HepG2 (cell line): ENCODE measurements at regions of chr21 and their contacts with region 1.

Region 1: DNA sequence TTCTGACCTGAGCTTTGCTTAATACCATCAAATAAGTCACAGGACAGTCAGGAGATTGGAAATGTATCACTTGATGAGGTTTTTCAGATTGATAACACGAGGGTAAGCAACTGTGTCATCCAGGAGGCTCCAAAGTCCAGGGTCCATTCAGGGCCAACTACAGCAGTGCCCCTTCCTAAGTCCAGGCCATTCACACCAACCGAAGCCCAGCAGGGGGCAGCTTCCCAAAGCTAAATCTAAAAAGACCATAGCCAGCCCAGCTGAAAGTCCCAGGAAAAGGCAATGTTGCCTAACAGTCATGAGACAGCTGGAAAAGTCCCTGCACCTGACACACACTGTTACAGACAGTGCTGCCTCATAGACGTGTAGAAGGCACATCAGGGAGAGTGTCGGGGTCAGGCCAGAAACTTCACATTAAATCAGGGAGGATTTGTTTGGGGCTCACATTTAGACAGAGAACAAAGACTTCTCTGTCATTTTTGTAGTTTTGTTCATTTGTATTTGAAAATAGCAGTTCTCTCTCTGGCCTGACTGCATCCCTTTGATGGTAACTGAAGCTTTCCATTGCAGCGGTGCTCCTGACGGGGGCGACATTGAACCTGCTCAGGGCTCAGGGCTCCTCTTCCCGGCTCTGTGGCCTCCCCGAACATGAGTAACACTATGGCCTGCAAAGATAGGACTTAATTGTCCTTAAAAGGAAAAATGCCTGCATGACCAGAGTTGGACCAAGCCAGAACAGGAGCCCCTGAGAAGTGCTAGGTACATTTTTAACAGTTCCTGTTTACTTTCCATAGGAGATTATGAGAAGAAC is 200.4 kb downstream of the NRIP1 start:
- DNase-seq: peak; percentile 94
- ATAC-seq: peak; percentile 95
- H3K4me3 ChIP-seq: peak overlapping the region in 2 of 3 experiments; percentile 48 to 53; a peak in 4 of 6 replicates
- H3K27ac ChIP-seq: peak overlapping the region; percentile 76
- H3K4me1 ChIP-seq: peaks cover 54% of the 10 kb centered on the region
- H3K27me3 ChIP-seq: no peaks in the 10 kb centered on the region
- CTCF ChIP-seq: peak; percentile 76
- EP300 ChIP-seq: peak in 1 of 2 experiments; percentile 69; a peak in 2 of 4 replicates
- POLR2A ChIP-seq: no peak
- RAD21 ChIP-seq: peak; percentile 72; the same call in 1 of the 2 replicates

Region 2: GRCh38 chr21:14877570-14878228 is 13.3 kb after region 1 on chr21:
- CTCF ChIA-PET with region 1: interaction called, 3 read pairs
- POLR2A ChIA-PET with region 1: interaction called, 27 read pairs
- in situ Hi-C with region 1: no loop called
- intact Hi-C with region 1: loop called (anchors 1 kb)
- DNase-seq: peak; percentile 96
- ATAC-seq: peak; percentile 70
- H3K4me3 ChIP-seq: peak overlapping the region in 1 of 3 experiments; percentile 15; a peak in 1 of 6 replicates
- H3K27ac ChIP-seq: peak overlapping the region; percentile 96
- H3K4me1 ChIP-seq: peaks cover 77% of the 10 kb centered on the region
- H3K27me3 ChIP-seq: no peaks in the 10 kb centered on the region
- CTCF ChIP-seq: no peak
- EP300 ChIP-seq: peak; percentile 54 to 96
- POLR2A ChIP-seq: no peak
- RAD21 ChIP-seq: no peak

Region 3: DNA sequence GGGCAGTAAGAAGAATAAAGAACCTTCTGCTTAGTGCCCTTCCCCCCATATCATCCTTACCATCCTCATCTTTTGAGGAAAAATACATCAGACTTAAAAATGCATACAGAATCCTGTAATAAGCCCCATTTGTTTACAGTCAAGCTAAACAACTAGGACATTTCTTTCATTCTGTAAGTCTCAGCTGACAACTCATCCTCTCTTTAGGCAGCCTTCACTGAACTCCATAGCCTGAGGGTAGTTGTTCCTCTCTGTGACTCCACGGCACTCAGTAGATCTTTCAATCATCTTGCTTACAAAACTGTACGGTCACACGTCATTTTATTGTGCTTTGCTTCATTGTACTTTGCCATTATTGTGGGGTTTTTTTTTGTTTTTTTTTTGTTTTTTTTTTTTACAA is 117.9 kb after region 1 on chr21:
- CTCF ChIA-PET with region 1: no interaction called
- POLR2A ChIA-PET with region 1: no interaction called
- in situ Hi-C with region 1: no loop called
- intact Hi-C with region 1: loop called (anchors 5 kb)
- DNase-seq: no peak
- ATAC-seq: no peak
- H3K4me3 ChIP-seq: no peak overlapping the region
- H3K27ac ChIP-seq: no peak overlapping the region
- H3K4me1 ChIP-seq: peaks cover 9% of the 10 kb centered on the region
- H3K27me3 ChIP-seq: no peaks in the 10 kb centered on the region
- CTCF ChIP-seq: no peak
- EP300 ChIP-seq: no peak
- POLR2A ChIP-seq: no peak
- RAD21 ChIP-seq: no peak

Region 4: DNA sequence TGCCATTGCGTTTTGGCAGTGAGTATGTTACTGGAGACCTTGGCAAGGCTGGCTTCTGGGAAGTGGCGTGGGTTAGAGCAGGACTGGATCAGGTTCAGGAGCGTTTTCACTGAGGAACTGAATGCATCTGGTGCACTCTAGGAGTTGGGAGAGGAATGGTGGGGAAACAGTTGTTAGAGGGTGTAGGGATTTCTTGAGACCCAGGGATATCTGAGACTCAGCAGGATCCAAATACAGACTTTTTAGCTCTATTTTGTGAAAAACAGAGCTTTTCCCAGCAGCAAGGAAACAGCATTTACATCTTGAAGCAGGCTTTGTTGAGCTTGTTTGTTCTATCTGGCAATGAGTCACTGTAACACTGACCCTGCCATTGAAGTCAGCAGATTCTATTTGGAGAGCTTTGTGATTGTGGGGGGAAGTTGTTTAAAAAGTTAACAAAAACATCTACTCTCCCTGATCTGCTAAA is 257.3 kb after region 1 on chr21:
- CTCF ChIA-PET with region 1: no interaction called
- POLR2A ChIA-PET with region 1: no interaction called
- in situ Hi-C with region 1: no loop called
- intact Hi-C with region 1: loop called (anchors 5 kb)
- DNase-seq: peak; percentile 79
- ATAC-seq: peak; percentile 97
- H3K4me3 ChIP-seq: peak overlapping the region; percentile 7 to 41 (median 35); a peak in 5 of 6 replicates
- H3K27ac ChIP-seq: peak overlapping the region; percentile 68
- H3K4me1 ChIP-seq: peaks cover 26% of the 10 kb centered on the region
- H3K27me3 ChIP-seq: no peaks in the 10 kb centered on the region
- CTCF ChIP-seq: no peak
- EP300 ChIP-seq: peak in 1 of 2 experiments; percentile 86; a peak in 2 of 4 replicates
- POLR2A ChIP-seq: no peak
- RAD21 ChIP-seq: no peak

Region 5: GRCh38 chr21:15445327-15445726 is 580.9 kb after region 1 on chr21:
- CTCF ChIA-PET with region 1: no interaction called
- POLR2A ChIA-PET with region 1: interaction called, 4 read pairs
- in situ Hi-C with region 1: no loop called
- intact Hi-C with region 1: loop called (anchors 5 kb)
- DNase-seq: no peak
- ATAC-seq: no peak
- H3K4me3 ChIP-seq: no peak overlapping the region
- H3K27ac ChIP-seq: peak overlapping the region; percentile 93
- H3K4me1 ChIP-seq: peaks cover 61% of the 10 kb centered on the region
- H3K27me3 ChIP-seq: no peaks in the 10 kb centered on the region
- CTCF ChIP-seq: no peak
- EP300 ChIP-seq: no peak
- POLR2A ChIP-seq: no peak
- RAD21 ChIP-seq: no peak

Region 6: GRCh38 chr21:15592271-15592860 is 728.0 kb after region 1 on chr21:
- CTCF ChIA-PET with region 1: interaction called, 3 read pairs
- POLR2A ChIA-PET with region 1: no interaction called
- in situ Hi-C with region 1: no loop called
- intact Hi-C with region 1: loop called (anchors 1 kb)
- DNase-seq: peak; percentile 44
- ATAC-seq: no peak
- H3K4me3 ChIP-seq: no peak overlapping the region
- H3K27ac ChIP-seq: no peak overlapping the region
- H3K4me1 ChIP-seq: peaks cover 7% of the 10 kb centered on the region; the same call in 1 of the 2 replicates
- H3K27me3 ChIP-seq: no peaks in the 10 kb centered on the region
- CTCF ChIP-seq: peak; percentile 73
- EP300 ChIP-seq: no peak
- POLR2A ChIP-seq: no peak
- RAD21 ChIP-seq: peak; percentile 61; the same call in 1 of the 2 replicates